Activated CD4-positive, alpha-beta T cell treated with anti-CD3 and anti-CD28 coated beads for 36 hours (primary cell): ENCODE measurements at regions of chr17 and their contacts with region 1.

Region 1: DNA sequence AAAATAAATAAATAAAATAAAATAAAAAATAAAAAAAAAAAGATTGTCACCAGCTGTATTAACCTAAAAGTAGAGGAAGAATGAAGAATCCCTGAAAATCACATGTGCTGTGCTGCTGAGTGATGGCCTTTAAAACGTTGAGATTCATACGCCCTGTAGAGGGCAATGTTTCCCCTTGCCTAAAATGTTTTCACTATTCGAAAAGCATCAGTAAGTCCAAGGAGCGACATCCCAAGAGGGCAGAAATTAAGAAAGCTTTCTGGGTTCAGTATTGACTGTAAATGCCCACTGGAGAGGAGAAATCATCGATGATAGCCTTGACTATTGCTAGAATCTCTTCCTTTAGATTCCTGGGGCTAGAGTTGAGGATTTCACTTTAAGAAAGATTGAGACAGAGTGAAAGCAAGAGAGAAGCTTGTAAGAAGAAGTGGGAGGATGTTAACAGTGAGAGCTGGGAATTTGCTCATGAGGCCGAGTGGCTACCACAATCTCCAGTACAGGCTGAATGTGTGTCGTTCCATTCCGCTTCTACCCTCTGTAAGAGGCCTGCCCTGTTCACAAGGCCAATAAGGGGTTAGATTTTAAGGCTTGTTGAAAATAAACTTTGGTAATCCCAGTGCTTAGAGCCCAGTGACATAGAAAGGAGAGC is 170.8 kb upstream of the FAM20A start:
- DNase-seq: no peak
- ATAC-seq: peak; percentile 36
- H3K4me3 Mint-ChIP-seq: no peak overlapping the region
- H3K27ac Mint-ChIP-seq: no peak overlapping the region
- H3K4me1 Mint-ChIP-seq: no peaks in the 10 kb centered on the region
- H3K27me3 Mint-ChIP-seq: no peaks in the 10 kb centered on the region

Region 2: GRCh38 chr17:68576811-68577496 is 195.0 kb before region 1 on chr17:
- CTCF ChIA-PET with region 1: no interaction called
- POLR2A ChIA-PET with region 1: no interaction called
- intact Hi-C with region 1: no loop called
- DNase-seq: no peak
- ATAC-seq: no peak
- H3K4me3 Mint-ChIP-seq: no peak overlapping the region
- H3K27ac Mint-ChIP-seq: no peak overlapping the region
- H3K4me1 Mint-ChIP-seq: no peaks in the 10 kb centered on the region
- H3K27me3 Mint-ChIP-seq: peaks cover 3% of the 10 kb centered on the region

Region 3: GRCh38 chr17:68972119-68972704 is 200.2 kb after region 1 on chr17:
- CTCF ChIA-PET with region 1: no interaction called
- POLR2A ChIA-PET with region 1: no interaction called
- intact Hi-C with region 1: loop called (anchors 1 to 5 kb)
- DNase-seq: no peak
- ATAC-seq: no peak
- H3K4me3 Mint-ChIP-seq: no peak overlapping the region
- H3K27ac Mint-ChIP-seq: no peak overlapping the region
- H3K4me1 Mint-ChIP-seq: no peaks in the 10 kb centered on the region
- H3K27me3 Mint-ChIP-seq: no peaks in the 10 kb centered on the region

Region 4: DNA sequence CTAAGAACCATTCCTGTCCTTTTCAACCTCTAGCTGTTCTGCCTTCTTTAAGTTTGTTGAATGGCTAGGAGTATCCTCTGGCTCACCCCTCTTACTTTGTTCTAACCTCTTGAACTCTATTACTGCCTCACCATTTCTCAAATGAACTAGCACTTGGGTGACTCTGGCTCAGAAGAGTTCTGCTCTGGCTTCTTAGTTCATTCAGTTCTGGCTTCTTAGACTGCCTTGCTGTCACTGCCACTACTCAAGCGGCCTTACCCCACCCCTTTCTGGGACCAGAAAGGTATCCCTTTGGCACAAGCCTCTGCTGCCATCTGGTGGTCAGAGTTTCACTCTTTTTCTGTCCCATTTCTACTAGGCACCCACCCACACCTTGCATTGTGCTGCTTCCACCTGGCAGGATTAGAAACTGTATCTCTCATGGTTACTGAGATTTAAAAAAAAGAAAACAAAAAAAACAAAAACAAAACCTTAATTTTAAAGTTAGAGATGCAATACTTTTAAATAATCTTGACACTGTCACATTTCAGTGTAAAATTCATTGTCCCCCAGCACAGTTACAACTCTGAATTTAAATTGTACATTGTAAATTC is 463.4 kb after region 1 on chr17:
- CTCF ChIA-PET with region 1: interaction called, 15 read pairs
- POLR2A ChIA-PET with region 1: no interaction called
- intact Hi-C with region 1: loop called (anchors 1 kb)
- DNase-seq: peak; percentile 83
- ATAC-seq: peak; percentile 80
- H3K4me3 Mint-ChIP-seq: no peak overlapping the region
- H3K27ac Mint-ChIP-seq: no peak overlapping the region
- H3K4me1 Mint-ChIP-seq: no peaks in the 10 kb centered on the region
- H3K27me3 Mint-ChIP-seq: no peaks in the 10 kb centered on the region

Region 5: GRCh38 chr17:69246726-69247375 is 474.9 kb after region 1 on chr17:
- CTCF ChIA-PET with region 1: interaction called, 26 read pairs
- POLR2A ChIA-PET with region 1: no interaction called
- intact Hi-C with region 1: loop called (anchors 1 kb)
- DNase-seq: no peak
- ATAC-seq: no peak
- H3K4me3 Mint-ChIP-seq: no peak overlapping the region
- H3K27ac Mint-ChIP-seq: no peak overlapping the region
- H3K4me1 Mint-ChIP-seq: no peaks in the 10 kb centered on the region
- H3K27me3 Mint-ChIP-seq: no peaks in the 10 kb centered on the region

Region 6: DNA sequence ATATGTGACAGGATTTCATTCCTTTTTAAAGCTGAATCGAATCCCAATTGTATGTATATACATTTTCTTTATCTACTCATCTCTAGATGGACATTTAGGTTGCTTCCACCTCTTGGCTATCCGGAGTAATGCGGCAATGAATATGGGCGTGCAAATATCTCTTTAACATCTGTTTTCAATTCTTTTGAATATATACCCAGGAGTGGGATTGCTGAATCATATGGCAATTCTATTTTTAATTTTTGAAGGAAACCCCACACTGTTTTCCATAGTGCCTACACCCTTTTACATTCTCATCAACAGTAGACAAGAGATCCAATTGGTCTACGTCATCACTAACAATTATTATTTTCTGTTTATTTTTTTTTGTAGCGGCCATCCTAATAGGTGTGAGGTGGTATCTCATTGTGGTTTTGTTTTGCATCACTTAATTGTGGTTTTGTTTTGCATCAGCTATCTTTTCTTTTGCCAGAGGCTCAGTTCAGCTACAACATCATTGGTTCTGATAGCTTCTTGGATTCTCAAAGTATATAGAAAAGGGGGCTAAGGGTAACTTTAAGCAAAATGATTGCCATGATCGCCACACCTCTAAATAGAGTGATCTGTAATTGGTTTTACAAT is 616.9 kb after region 1 on chr17:
- CTCF ChIA-PET with region 1: no interaction called
- POLR2A ChIA-PET with region 1: no interaction called
- intact Hi-C with region 1: loop called (anchors 1 to 10 kb)
- DNase-seq: no peak
- ATAC-seq: no peak
- H3K4me3 Mint-ChIP-seq: no peak overlapping the region
- H3K27ac Mint-ChIP-seq: no peak overlapping the region
- H3K4me1 Mint-ChIP-seq: no peaks in the 10 kb centered on the region
- H3K27me3 Mint-ChIP-seq: peaks cover 4% of the 10 kb centered on the region